ENCODE measurements at regions of chr5 and their contacts with region 1.

Region 1: GRCh38 chr5:112210430-112211005 is 208.6 kb downstream of the EPB41L4A start:
- DNase-seq: no peak
- H3K4me3 ChIP-seq: no peak overlapping the region
- H3K27ac ChIP-seq: no peak overlapping the region
- H3K4me1 ChIP-seq: peaks cover 0 to 5% (median 2%) of the 10 kb centered on the region in 4 experiments; a peak in 3 of 7 replicates
- H3K27me3 ChIP-seq: no peaks in the 10 kb centered on the region
- CTCF ChIP-seq: peak in 2 of 3 experiments; percentile 61 to 63; a peak in 3 of 4 replicates
- EP300 ChIP-seq: no peak
- POLR2A ChIP-seq: no peak
- RAD21 ChIP-seq: peak; percentile 80 to 84

Region 2: GRCh38 chr5:111834926-111835598 is 375.5 kb before region 1 on chr5:
- CTCF ChIA-PET with region 1: no interaction called
- POLR2A ChIA-PET with region 1: no interaction called
- DNase-seq: no peak
- H3K4me3 ChIP-seq: no peak overlapping the region
- H3K27ac ChIP-seq: no peak overlapping the region
- H3K4me1 ChIP-seq: no peaks in the 10 kb centered on the region
- H3K27me3 ChIP-seq: no peaks in the 10 kb centered on the region
- CTCF ChIP-seq: no peak; a peak in 1 of 4 replicates
- EP300 ChIP-seq: no peak
- POLR2A ChIP-seq: no peak
- RAD21 ChIP-seq: peak; percentile 45 to 62

Region 3: GRCh38 chr5:112221128-112221527 is 10.6 kb after region 1 on chr5:
- CTCF ChIA-PET with region 1: interaction called, 23 read pairs
- POLR2A ChIA-PET with region 1: no interaction called
- DNase-seq: no peak
- H3K4me3 ChIP-seq: no peak overlapping the region
- H3K27ac ChIP-seq: no peak overlapping the region
- H3K4me1 ChIP-seq: peaks cover 0 to 7% (median 4%) of the 10 kb centered on the region in 4 experiments; a peak in 5 of 7 replicates
- H3K27me3 ChIP-seq: no peaks in the 10 kb centered on the region
- CTCF ChIP-seq: no peak
- EP300 ChIP-seq: no peak
- POLR2A ChIP-seq: no peak
- RAD21 ChIP-seq: no peak

Region 4: DNA sequence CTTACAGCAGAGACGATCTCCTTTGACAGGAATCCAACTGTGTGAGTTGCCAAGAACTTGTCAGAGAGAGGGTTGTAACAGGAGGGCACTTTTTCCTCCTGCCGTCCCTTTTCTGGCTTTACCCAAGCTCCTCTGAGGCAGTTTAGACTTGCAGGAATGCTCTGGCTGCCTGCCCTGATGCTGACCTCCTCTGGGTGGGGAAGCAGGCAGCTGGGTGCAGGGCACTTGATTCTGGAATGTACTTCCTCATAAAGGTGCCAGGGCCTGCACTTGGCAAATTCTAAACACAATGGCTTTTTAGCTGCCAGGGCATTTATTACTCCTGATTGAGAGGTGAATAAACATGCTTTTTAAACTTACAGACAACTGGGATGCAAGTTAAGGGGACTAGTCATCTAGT is 18.1 kb after region 1 on chr5:
- CTCF ChIA-PET with region 1: interaction called, 23 read pairs
- POLR2A ChIA-PET with region 1: no interaction called
- DNase-seq: no peak
- H3K4me3 ChIP-seq: no peak overlapping the region
- H3K27ac ChIP-seq: no peak overlapping the region
- H3K4me1 ChIP-seq: peaks cover 0 to 9% (median 3%) of the 10 kb centered on the region in 4 experiments; a peak in 4 of 7 replicates
- H3K27me3 ChIP-seq: no peaks in the 10 kb centered on the region
- CTCF ChIP-seq: no peak
- EP300 ChIP-seq: no peak
- POLR2A ChIP-seq: no peak
- RAD21 ChIP-seq: no peak